Cardiac septum (tissue), 1 donor: ENCODE measurements at regions of chr9 and their contacts with region 1.

Region 1: DNA sequence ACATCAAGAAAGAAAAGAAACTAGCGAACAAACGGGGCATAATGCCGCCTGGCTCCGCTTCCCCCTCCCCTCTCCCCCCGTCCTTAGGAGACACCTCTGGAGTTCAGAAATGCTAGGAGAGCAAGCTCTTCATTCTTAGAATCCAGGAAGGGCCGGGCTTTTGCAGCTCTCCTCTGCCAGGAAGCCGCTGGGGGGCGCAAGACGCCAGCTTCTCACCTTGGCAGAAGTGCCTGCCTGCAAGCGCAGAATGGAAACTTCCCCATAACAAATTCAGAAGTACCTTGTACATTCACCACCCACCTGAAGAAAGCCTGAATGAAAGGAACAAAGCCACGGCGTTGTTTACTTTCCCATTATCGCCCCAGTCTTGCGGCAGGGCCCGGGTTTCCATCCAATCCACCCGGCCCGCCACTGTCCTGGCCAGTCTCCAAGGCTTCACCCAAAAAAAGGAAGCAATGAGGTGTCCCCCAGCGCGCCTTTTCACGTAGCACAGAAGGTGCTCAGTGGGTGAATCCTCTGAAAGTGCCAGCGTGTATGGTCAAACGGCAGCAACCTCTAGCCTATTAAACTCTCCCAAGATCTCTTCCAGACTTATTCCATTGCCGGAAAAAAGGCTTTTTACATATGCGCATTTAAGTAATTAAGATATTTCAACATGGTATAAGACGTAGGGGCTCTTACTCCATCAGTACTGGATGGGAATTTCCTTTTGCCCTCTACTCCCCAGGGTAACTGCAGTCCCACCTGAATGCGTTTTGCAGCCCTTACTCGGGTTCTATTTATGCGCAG is 1.6 kb upstream of the GADD45G start:
- DNase-seq: peak; percentile 95

Region 2: GRCh38 chr9:89639367-89639795 is 36.2 kb after region 1 on chr9:
- intact Hi-C with region 1: no loop called
- DNase-seq: no peak

Region 3: GRCh38 chr9:89661956-89662717 is 59.0 kb after region 1 on chr9:
- intact Hi-C with region 1: loop called (anchors 2 kb)
- DNase-seq: peak; percentile 96

Region 4: DNA sequence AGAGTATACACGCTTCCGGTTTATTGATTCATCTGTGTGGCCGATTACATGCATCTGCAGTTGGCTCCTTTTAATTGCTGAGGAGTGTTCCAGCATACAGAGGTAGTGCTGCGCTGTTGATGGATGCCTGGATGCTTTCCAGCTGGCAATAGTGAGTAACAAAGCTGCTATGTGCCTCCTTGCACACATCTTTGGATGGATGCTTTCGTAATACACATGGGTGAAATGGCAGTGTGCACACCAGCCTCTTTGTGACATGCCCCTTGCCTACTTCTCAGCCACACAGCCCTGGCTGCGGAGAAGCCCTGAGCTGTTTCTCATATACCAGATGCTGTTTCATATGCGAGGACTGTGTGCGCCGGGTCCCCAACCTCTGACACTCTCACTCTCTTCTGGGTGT is 152.6 kb after region 1 on chr9:
- intact Hi-C with region 1: loop called (anchors 5 kb)
- DNase-seq: no peak

Region 5: GRCh38 chr9:89825669-89826068 is 222.5 kb after region 1 on chr9:
- intact Hi-C with region 1: no loop called
- DNase-seq: no peak

Region 6: GRCh38 chr9:89878687-89879086 is 275.5 kb after region 1 on chr9:
- intact Hi-C with region 1: loop called (anchors 5 kb)
- DNase-seq: peak; percentile 90

Region 7: DNA sequence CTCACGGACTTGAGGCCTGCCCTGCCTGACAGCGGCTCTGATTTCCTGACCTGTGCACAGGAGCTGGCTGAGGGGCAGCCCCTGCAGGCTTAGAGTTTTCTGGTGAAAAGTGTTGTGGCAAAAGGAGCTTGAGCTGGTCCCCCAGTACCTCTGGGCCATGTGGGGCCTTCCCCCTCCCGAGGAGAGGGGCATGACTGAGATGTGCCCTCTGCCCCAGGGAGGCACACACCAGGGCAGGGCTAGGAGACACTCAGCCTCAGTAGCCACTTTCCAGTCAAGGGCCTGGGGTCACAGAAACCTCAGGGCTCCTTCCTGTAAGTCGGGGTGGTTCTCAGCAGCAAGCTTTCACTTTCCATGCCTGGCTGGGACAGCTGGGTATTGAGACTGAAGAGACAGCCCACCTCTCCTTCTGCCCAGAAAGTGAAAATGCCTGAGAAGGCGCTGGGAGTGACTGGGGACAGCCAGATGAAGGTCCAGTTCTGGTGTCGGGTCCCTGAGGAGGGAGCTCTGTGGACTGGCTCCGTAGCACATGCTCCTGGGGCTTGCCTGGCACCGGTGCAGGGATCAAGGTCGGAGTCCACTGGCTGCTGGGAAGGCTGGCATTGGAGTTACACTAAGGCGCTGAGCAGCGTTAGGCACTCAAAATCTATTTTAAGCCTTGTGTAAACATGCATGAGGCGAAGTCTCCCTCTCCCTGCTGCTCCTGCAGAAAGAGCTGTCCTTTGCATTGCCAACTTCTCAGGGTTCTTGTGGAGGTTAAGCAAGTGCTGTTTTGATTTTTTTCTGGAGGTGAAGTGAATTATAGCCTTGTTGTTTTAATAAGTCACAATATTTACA is 396.6 kb after region 1 on chr9:
- intact Hi-C with region 1: loop called (anchors 2 kb)
- DNase-seq: peak; percentile 89